ENCODE measurements at regions of chr1 and their contacts with region 1.

Region 1: DNA sequence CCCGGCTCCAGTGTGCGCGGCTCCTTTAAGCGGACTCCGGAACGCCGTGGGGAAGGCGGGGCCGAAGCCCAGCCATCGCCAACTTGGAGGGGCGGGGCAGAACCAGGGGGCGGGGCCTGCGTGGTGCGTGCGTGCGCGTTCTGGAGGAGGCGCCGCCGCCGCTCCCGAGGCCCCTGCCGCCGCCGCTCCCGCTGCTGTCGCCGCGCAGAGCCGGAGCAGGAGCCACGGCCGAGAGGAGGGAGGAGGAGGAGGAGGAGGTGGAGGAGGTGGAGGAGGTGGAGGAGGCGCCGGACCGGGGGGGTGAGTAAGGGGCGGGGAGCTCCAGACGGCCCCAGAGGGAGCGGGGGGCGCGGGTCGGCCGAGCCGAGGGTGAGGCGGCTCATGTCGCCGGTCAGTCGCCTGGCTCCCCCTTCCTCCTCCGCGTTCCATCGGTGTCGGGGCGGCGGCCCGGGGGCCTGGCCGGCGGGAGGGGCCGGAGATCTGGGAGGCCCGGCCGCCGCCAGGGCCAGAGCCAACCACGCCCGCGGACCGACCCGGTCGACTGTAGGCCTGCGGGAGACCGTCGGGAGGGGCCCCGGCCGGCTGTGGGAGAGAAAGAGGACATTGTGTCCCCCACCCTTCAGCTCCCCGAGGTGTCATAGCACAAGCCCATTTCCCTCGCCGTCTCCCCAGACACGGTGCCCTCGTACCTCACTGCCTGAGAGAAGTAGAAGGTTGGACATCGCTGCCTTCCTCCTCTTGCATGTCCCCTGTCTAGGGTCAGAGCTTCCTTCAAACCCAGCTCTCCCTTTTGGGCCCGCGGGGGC is at the start of gene RAP1A:
- DNase-seq: peak; percentile 80 to 95 (median 90)
- ATAC-seq: peak; percentile 93
- H3K4me3 ChIP-seq: peak within 1 kb of the TSS; percentile 88
- H3K4me3 Mint-ChIP-seq: peak within 1 kb of the TSS; percentile 93 to 99 (median 96)
- H3K27ac ChIP-seq: peak within 1 kb of the TSS; percentile 91
- H3K27ac Mint-ChIP-seq: peak within 1 kb of the TSS; percentile 86 to 98 (median 95)
- H3K4me1 ChIP-seq: peaks cover 46 to 64% of the 10 kb centered on the region in 2 donors
- H3K4me1 Mint-ChIP-seq: peaks cover 57 to 82% (median 76%) of the 10 kb centered on the region in 7 donors
- H3K27me3 ChIP-seq: no peaks in the 10 kb centered on the region
- H3K27me3 Mint-ChIP-seq: no peaks in the 10 kb centered on the region
- total RNA-seq, gene RAP1A: 89.8 to 183 (median 107) TPM

Region 2: DNA sequence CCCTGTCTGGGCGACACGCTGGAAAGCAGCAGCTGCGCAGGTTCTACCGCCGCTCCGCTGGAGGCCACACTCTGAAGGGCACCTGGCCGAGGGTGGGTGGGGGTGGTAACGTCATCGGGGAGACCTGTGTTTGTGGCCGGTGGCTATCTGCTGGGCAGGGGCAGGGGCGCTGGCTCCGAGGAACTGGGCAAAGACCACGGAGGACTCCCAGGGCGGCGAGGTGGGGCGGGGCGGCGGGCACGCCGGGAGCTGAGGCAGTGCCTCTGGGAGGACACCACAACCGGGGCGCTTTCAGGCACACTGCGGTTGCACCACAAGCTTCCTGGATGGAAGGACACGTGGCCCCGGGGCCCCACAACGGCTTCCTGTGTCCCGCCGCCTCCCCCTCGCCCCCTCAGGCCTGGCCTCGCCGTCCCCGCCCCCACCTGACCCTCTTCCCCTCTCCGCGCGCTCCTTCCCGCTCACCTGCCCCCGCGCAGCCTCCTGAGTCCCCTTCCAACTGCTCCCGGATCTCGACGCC is 416.1 kb before region 1 on chr1:
- CTCF ChIA-PET with region 1: no interaction called
- POLR2A ChIA-PET with region 1: no interaction called
- intact Hi-C with region 1: loop called (anchors 5 to 10 kb)
- DNase-seq: peak; percentile 51 to 86 (median 82)
- ATAC-seq: peak; percentile 71
- H3K4me3 ChIP-seq: peak overlapping the region; percentile 84
- H3K4me3 Mint-ChIP-seq: peak overlapping the region; percentile 90 to 100 (median 99)
- H3K27ac ChIP-seq: peak overlapping the region; percentile 90
- H3K27ac Mint-ChIP-seq: peak overlapping the region; percentile 80 to 99 (median 96)
- H3K4me1 ChIP-seq: peaks cover 30 to 32% of the 10 kb centered on the region in 2 donors
- H3K4me1 Mint-ChIP-seq: peaks cover 32 to 76% (median 61%) of the 10 kb centered on the region in 7 donors
- H3K27me3 ChIP-seq: no peaks in the 10 kb centered on the region
- H3K27me3 Mint-ChIP-seq: no peaks in the 10 kb centered on the region

Region 3: DNA sequence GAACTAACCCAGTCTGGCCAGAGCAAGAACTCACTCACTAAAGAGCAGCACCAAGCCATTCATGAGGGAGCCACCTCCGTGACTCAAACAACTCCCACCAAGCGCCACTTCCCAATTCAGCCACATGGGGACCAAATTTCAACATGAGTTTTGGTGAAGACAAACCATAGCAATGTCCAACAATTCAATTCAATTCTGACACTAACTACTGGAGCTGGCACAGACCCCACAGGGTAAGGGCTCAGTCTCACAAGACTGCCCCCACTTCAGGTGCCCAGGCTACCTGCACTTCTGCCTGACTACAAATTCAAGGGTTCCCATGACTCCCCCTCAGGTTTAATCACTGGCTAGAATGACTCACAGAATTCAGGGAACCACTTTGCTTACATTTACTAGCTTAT is 49.1 kb before region 1 on chr1:
- CTCF ChIA-PET with region 1: no interaction called
- POLR2A ChIA-PET with region 1: interaction called, 6 read pairs
- intact Hi-C with region 1: loop called in 1 of 2 experiments (anchors 1 kb)
- DNase-seq: peak in 5 of 9 donors; percentile 9 to 23 (median 22)
- ATAC-seq: peak; percentile 54
- H3K4me3 ChIP-seq: no peak overlapping the region
- H3K4me3 Mint-ChIP-seq: no peak overlapping the region
- H3K27ac ChIP-seq: no peak overlapping the region
- H3K27ac Mint-ChIP-seq: peak overlapping the region in 3 of 9 donors; percentile 7 to 82 (median 53)
- H3K4me1 ChIP-seq: no peaks in the 10 kb centered on the region
- H3K4me1 Mint-ChIP-seq: peaks cover 5 to 20% (median 13%) of the 10 kb centered on the region in 7 donors
- H3K27me3 ChIP-seq: no peaks in the 10 kb centered on the region
- H3K27me3 Mint-ChIP-seq: no peaks in the 10 kb centered on the region

Region 4: GRCh38 chr1:111603979-111604378 is 15.9 kb before region 1 on chr1:
- CTCF ChIA-PET with region 1: interaction called, 6 read pairs
- POLR2A ChIA-PET with region 1: interaction called, 173 read pairs
- intact Hi-C with region 1: loop called (anchors 1 kb)
- DNase-seq: peak; percentile 33 to 88 (median 80)
- ATAC-seq: peak; percentile 99
- H3K4me3 ChIP-seq: no peak overlapping the region
- H3K4me3 Mint-ChIP-seq: peak overlapping the region; percentile 44 to 84 (median 72)
- H3K27ac ChIP-seq: peak overlapping the region; percentile 57
- H3K27ac Mint-ChIP-seq: peak overlapping the region; percentile 83 to 98 (median 89)
- H3K4me1 ChIP-seq: peaks cover 49 to 77% of the 10 kb centered on the region in 2 donors
- H3K4me1 Mint-ChIP-seq: peaks cover 48 to 77% (median 74%) of the 10 kb centered on the region in 7 donors
- H3K27me3 ChIP-seq: no peaks in the 10 kb centered on the region
- H3K27me3 Mint-ChIP-seq: no peaks in the 10 kb centered on the region

Region 5: DNA sequence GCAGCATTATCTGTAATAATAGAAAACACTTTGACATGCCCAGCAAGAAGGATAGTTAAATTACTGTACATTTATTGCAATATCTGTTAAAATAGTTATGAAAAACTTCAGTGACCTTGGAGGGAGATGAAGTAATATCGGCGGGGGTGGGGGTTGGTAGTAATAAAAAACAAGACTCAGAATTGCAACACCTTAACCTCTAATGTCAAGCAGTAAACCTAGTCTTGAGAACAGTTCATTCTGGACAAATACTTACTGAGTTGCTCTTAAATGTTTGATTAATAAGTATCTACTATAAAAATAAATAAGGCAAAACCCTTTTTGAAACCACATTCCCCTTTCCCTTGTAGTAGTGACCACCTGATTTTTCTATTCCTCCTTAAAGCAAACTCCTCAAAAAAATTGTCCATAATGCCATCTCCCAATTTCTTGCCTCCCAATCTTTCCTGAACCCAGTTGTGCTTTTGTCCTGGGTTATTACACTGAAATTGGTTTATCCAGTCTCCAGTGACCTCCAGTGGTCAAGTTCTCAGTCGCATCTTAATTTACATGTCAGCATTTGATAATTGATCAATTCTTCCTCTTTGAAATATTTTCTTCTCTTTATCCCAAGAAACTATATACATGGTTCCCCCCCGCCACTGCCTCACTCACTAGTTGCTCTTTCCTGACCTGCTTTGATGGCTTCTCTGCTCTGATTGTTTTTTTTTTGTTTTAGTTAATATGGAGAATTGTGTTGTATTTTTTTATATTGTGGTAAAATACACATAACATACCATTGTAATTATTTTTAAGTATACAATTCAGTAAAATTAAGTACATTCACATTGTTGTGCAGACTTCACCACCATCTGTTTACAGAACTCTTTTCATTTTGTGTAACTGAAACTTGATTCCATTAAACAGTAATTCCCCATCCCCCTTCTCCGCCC is 36.5 kb after region 1 on chr1:
- CTCF ChIA-PET with region 1: interaction called, 4 read pairs
- POLR2A ChIA-PET with region 1: interaction called, 4 read pairs
- intact Hi-C with region 1: loop called (anchors 1 to 5 kb)
- DNase-seq: peak in 4 of 9 donors; percentile 15 to 36 (median 20)
- ATAC-seq: no peak
- H3K4me3 ChIP-seq: no peak overlapping the region
- H3K4me3 Mint-ChIP-seq: peak overlapping the region in 6 of 10 donors; percentile 2 to 52 (median 38)
- H3K27ac ChIP-seq: no peak overlapping the region
- H3K27ac Mint-ChIP-seq: peak overlapping the region in 8 of 9 donors; percentile 9 to 84 (median 37)
- H3K4me1 ChIP-seq: peaks cover 38 to 54% of the 10 kb centered on the region in 2 donors
- H3K4me1 Mint-ChIP-seq: peaks cover 34 to 56% (median 45%) of the 10 kb centered on the region in 7 donors
- H3K27me3 ChIP-seq: no peaks in the 10 kb centered on the region
- H3K27me3 Mint-ChIP-seq: no peaks in the 10 kb centered on the region

Region 6: DNA sequence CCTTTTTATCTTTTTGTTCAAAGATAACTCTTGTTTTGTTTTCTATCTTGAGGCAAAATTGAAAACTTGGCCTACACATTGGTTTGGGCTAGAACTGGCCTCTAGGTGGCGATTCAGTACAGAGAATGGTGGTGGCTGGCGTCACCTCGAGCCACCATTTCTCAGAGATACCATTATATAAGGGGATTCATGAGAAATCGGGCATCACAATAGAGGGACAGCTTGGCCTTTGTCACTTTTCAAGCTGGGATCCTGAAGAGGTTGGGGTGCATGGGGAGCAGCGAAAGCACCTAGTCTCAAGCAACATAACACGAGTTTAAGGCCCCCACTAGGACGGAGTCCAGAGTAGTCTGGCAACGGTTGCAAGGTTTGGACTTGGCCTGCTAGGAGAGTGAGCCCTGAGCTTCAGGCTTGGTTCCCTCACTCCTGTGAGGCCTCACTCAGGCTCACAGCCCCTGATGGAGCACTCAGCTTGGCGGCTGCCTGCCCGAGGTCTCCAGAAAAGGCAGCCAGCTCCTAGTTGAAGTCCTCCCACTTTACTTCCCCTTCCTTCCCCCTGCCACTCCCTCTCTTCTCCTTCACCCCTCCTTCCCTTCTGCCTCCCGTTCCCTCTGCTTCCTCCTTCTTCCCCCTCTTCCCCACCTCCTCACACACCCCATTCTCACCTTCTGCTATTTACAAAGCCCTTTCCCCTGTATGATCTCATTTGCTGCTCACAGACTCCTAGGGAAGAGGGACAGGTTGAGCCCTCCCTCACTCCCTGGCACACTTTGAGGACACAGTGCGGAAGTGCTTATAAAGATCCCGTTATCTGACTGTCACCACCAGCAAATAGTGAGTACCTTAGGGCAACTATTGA is 1521.0 kb after region 1 on chr1:
- CTCF ChIA-PET with region 1: no interaction called
- POLR2A ChIA-PET with region 1: no interaction called
- intact Hi-C with region 1: no loop called
- DNase-seq: peak in 8 of 9 donors; percentile 8 to 62 (median 47)
- ATAC-seq: peak; percentile 87
- H3K4me3 ChIP-seq: no peak overlapping the region
- H3K4me3 Mint-ChIP-seq: peak overlapping the region in 2 of 10 donors; percentile 21 to 59
- H3K27ac ChIP-seq: no peak overlapping the region
- H3K27ac Mint-ChIP-seq: peak overlapping the region in 4 of 9 donors; percentile 21 to 49 (median 46)
- H3K4me1 ChIP-seq: peaks cover 0 to 8% of the 10 kb centered on the region in 2 donors
- H3K4me1 Mint-ChIP-seq: peaks cover 8 to 25% (median 19%) of the 10 kb centered on the region in 7 donors
- H3K27me3 ChIP-seq: no peaks in the 10 kb centered on the region
- H3K27me3 Mint-ChIP-seq: no peaks in the 10 kb centered on the region